Gastrocnemius medialis (tissue), 4 donors: ENCODE measurements at regions of chr4 and their contacts with region 1.

Region 1: DNA sequence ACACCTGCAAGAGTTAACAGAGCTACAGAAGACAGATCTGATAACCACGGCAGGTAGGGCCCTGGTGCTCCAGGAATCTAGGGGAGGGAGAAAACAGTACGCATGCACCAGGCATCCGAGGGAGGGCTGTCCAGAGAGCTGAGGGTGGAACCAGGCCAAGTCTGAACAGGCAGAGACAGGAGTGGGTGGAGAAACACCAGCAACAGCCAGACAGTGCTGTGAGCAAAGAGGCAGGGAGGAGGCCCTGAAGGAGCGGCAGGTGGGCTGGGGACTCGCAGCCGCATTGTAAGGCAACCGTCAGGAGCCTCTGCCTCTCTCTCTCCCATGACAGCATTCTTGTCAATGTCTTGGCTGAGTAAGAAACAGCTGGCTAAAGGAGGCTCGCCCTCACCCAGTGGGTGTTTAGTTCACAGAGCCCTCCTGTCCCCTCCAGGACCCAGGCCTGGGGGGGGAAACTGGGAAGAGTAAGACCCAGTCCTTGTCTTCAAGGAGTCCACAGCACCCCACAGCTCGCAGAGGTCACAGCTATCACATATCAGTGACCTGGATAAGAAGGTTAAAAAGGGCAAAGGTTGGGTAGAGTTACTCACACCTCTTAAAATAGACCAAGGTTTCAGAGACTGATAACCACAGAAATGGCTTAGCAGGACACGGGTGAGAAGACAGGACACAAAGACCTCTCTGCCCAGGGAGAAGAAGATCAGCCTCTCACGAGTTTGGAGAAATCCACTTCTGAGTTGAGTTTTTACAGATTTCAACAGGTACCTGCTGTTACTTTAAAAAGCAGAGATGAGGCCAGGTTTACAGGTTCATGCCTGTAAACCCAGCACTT is 10.5 kb downstream of the ACSL1 start:
- DNase-seq: peak; percentile 89 to 96
- ATAC-seq: peak; percentile 33 to 41
- H3K4me3 ChIP-seq: peak overlapping the region; percentile 32 to 55 (median 46)
- H3K27ac ChIP-seq: peak overlapping the region; percentile 97 to 100 (median 98)
- H3K4me1 ChIP-seq: peaks cover 65 to 80% of the 10 kb centered on the region in 2 donors
- H3K27me3 ChIP-seq: no peaks in the 10 kb centered on the region
- CTCF ChIP-seq: no peak
- POLR2A ChIP-seq: no peak

Region 2: DNA sequence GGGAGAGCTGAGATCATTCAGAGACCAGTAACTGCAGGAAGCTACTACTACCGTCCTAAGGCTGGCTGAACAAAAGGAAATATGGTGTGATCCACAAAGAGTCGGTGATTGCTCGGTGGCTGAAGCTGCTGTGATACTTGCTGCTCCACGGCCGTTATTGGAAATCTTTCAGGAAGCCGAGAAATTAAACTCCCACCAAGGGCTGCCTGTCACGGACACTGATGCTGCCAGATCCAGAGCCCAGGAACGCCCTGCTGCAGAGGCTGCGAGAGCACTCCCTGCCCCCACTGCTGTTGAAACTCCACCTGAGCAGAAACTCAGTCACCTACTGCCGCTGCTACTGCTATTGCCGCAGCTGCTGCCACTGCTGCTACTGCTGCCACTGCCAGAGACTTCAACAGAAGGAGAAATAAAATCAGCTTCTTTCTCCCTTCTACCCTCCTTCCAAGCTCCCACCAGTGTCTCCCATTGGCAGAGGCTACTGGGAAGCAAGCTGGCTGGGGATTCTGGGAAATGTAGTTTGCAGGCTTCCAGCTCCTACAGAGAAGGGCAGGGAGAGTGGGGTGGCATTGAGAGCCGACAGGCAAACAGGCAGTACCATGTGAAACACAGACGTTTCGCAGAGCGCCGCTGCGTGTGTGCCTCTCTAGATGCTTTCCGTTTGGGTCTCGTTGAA is 471.6 kb before region 1 on chr4:
- in situ Hi-C with region 1: no loop called
- intact Hi-C with region 1: loop called (anchors 10 kb)
- DNase-seq: peak; percentile 77 to 84
- ATAC-seq: peak; percentile 64 to 69
- H3K4me3 ChIP-seq: peak overlapping the region; percentile 56 to 82 (median 67)
- H3K27ac ChIP-seq: peak overlapping the region; percentile 91 to 97 (median 92)
- H3K4me1 ChIP-seq: peaks cover 51 to 54% of the 10 kb centered on the region in 2 donors
- H3K27me3 ChIP-seq: no peaks in the 10 kb centered on the region
- CTCF ChIP-seq: no peak
- POLR2A ChIP-seq: peak; percentile 50 to 69

Region 3: DNA sequence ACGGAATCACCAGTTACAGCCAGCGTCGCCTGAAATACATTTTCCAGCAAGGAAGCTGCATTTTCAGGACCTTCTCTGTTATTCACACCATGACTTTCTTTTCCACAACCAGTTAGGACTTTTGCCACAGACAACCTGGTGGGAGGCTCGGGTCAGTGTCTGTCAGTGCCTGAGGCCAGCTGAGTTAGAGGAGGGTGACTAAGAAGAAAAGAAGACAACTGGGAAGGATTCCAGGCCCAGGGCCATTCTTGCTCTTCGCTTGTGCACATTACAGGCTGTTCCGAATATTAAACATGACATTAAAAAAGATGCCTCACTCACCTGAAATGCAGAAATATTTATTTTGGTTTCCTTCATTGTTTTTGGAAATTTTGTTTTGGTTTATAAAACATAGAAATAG is 60.0 kb before region 1 on chr4:
- in situ Hi-C with region 1: loop called in 1 of 4 experiments (anchors 10 kb)
- intact Hi-C with region 1: no loop called
- DNase-seq: peak; percentile 59 to 77
- ATAC-seq: peak; percentile 34 to 44
- H3K4me3 ChIP-seq: no peak overlapping the region
- H3K27ac ChIP-seq: peak overlapping the region; percentile 69 to 85 (median 78)
- H3K4me1 ChIP-seq: peaks cover 38 to 57% of the 10 kb centered on the region in 2 donors
- H3K27me3 ChIP-seq: no peaks in the 10 kb centered on the region
- CTCF ChIP-seq: no peak
- POLR2A ChIP-seq: no peak

Region 4: DNA sequence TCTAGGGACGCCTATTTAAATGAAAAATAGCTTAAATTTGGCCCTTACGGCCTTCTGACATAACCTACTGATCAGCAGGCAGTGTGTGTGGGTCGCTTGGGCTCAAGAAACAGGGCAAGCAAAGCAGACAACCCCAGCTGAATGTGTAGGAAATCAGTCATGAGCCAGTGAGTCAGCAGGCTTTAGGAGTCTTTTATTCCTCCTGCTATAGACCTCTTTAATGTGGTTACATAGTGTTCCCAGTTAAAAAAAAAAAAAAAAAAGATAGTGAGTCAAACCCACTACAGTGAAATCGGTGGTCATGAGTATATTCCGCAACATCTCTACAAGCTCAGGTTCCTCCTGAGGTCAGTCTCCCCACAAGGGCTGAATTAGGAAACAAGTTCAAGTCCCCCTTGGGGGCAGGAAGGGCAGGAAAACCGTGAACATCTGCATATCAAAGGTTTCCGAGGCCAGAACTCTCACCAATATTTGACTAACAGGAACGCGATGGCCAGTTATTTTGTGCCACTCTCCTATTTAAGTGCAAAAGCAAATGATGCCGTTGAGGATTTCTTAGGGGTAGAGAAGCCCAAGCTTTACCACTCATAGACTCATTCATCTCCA is 22.2 kb before region 1 on chr4:
- in situ Hi-C with region 1: no loop called
- intact Hi-C with region 1: loop called (anchors 1 kb)
- DNase-seq: peak; percentile 85 to 86
- ATAC-seq: peak; percentile 83 to 87
- H3K4me3 ChIP-seq: peak overlapping the region; percentile 15 to 33 (median 28)
- H3K27ac ChIP-seq: peak overlapping the region; percentile 97 to 100 (median 98)
- H3K4me1 ChIP-seq: peaks cover 76 to 79% of the 10 kb centered on the region in 2 donors
- H3K27me3 ChIP-seq: no peaks in the 10 kb centered on the region
- CTCF ChIP-seq: no peak
- POLR2A ChIP-seq: peak in 1 of 2 donors; percentile 52

Region 5: DNA sequence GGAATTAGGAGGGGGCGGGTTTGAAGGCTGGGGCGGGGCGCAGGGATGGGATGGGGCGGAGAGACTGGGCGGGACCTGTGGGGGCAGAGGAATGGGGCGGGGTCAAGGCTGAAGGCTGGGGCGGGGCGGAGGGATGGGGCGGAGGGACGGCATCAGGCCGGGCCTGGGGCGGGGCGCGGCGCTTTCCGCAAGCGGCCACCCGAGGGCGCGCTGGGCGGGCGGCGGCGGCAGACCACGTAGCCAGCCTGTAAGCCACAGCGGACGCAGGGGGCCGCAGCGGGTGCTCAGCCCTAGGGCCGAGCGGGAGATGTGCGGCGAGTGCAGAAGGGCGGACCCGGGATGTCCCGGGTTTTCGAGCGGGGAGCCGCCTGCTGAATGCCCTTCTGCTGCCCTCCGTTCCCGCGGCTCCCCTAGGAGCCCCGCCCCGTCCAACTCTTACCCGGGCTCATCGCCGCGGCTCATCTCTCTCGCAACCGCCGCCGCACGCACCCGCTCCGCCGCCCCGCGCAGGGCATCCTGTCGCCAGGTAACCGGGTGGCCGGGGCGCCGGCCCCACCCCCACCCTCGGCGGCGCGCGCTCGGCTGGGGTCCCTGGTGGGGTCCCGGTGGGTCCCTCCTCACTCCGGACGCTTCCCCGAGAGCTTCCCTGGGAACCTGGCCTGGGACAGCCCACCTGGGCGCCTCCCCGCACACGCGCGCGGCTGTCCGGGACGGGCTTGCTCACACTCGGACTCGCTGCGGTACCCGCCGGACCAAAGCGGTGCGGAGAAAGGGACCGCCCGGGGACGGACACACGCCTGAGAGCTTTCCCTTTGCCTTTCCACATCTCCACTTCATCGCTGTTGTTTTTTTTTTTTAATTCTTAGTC is 656.2 kb after region 1 on chr4 and contains the start of gene CCDC110:
- in situ Hi-C with region 1: no loop called
- intact Hi-C with region 1: no loop called
- DNase-seq: peak; percentile 92 to 94
- ATAC-seq: peak; percentile 84 to 88
- H3K4me3 ChIP-seq: peak within 1 kb of the TSS; percentile 74 to 94 (median 83)
- H3K27ac ChIP-seq: peak within 1 kb of the TSS; percentile 79 to 83 (median 80)
- H3K4me1 ChIP-seq: peaks cover 0 to 4% of the 10 kb centered on the region in 2 donors
- H3K27me3 ChIP-seq: no peaks in the 10 kb centered on the region
- CTCF ChIP-seq: peak; percentile 63 to 90 (median 75)
- POLR2A ChIP-seq: peak; percentile 67 to 75
- total RNA-seq, gene CCDC110: 0.97 to 4.1 (median 1.8) TPM

Region 6: GRCh38 chr4:185504098-185505047 is 689.1 kb after region 1 on chr4:
- in situ Hi-C with region 1: no loop called
- intact Hi-C with region 1: loop called (anchors 10 kb)
- DNase-seq: peak; percentile 91 to 97
- ATAC-seq: peak; percentile 82 to 87
- H3K4me3 ChIP-seq: peak overlapping the region in 3 of 4 donors; percentile 10 to 22 (median 17)
- H3K27ac ChIP-seq: peak overlapping the region; percentile 83 to 96 (median 92)
- H3K4me1 ChIP-seq: peaks cover 41 to 58% of the 10 kb centered on the region in 2 donors
- H3K27me3 ChIP-seq: no peaks in the 10 kb centered on the region
- CTCF ChIP-seq: no peak
- POLR2A ChIP-seq: peak in 1 of 2 donors; percentile 41

Region 7: GRCh38 chr4:185573651-185574199 is 758.5 kb after region 1 on chr4:
- in situ Hi-C with region 1: loop called in 1 of 4 experiments (anchors 25 kb)
- intact Hi-C with region 1: loop called (anchors 10 kb)
- DNase-seq: peak; percentile 82 to 90
- ATAC-seq: peak; percentile 76 to 82
- H3K4me3 ChIP-seq: peak overlapping the region in 2 of 4 donors; percentile 9 to 16
- H3K27ac ChIP-seq: peak overlapping the region; percentile 91 to 93 (median 92)
- H3K4me1 ChIP-seq: peaks cover 64 to 75% of the 10 kb centered on the region in 2 donors
- H3K27me3 ChIP-seq: no peaks in the 10 kb centered on the region
- CTCF ChIP-seq: no peak
- POLR2A ChIP-seq: peak; percentile 59 to 86

Region 8: DNA sequence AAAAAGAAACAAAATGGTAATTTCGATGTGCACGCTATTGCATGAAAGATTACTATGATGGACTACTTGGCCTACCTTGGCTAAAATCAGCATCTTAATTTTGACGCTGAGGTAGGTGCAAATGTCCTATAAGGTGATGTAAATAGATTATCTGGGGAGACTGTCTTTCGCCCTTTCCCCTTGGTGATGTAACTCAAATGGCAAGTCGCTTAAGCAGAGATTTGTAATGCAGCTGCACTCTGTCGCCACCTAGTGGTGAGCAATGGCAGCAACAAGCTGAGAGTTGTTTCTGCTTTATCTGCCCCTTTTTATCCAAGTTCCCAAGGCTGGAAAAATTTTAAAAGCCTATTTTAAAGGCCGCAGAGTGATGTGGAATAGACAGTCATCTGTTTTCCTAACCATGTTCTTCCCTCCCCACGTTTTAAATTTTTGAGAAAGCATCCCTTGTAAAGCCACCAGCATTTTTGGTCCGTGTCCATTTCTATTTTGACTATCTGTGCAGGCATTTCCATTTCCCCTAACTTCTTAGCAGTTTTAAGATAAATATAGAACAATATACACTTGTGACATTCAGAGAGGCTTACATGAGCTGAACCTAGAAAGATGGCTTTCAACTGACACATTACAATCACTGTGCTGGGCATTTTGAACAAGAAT is 782.4 kb after region 1 on chr4:
- in situ Hi-C with region 1: loop called in 1 of 4 experiments (anchors 25 kb)
- intact Hi-C with region 1: no loop called
- DNase-seq: peak; percentile 52 to 69
- ATAC-seq: peak; percentile 74 to 86
- H3K4me3 ChIP-seq: no peak overlapping the region
- H3K27ac ChIP-seq: peak overlapping the region in 3 of 4 donors; percentile 47 to 59 (median 49)
- H3K4me1 ChIP-seq: peaks cover 4 to 11% of the 10 kb centered on the region in 2 donors
- H3K27me3 ChIP-seq: no peaks in the 10 kb centered on the region
- CTCF ChIP-seq: peak; percentile 95 to 100 (median 98)
- POLR2A ChIP-seq: no peak